IMR-90 (cell line): ENCODE measurements at regions of chr1 and their contacts with region 1.

Region 1: GRCh38 chr1:207787776-207788175 is 35.9 kb downstream of the CD46 start:
- DNase-seq: peak; percentile 46
- ATAC-seq: peak; percentile 62
- H3K4me3 ChIP-seq: no peak overlapping the region
- H3K27ac ChIP-seq: no peak overlapping the region
- H3K4me1 ChIP-seq: peaks cover 8% of the 10 kb centered on the region; the same call in 1 of the 2 replicates
- H3K27me3 ChIP-seq: no peaks in the 10 kb centered on the region
- CTCF ChIP-seq: no peak
- POLR2A ChIP-seq: no peak
- RAD21 ChIP-seq: no peak

Region 2: GRCh38 chr1:206834711-206835110 is 953.1 kb before region 1 on chr1:
- CTCF ChIA-PET with region 1: no interaction called
- POLR2A ChIA-PET with region 1: no interaction called
- dilution Hi-C with region 1: no loop called
- in situ Hi-C with region 1: no loop called
- intact Hi-C with region 1: no loop called
- DNase-seq: no peak
- ATAC-seq: no peak; the same call in 1 of the 2 replicates
- H3K4me3 ChIP-seq: no peak overlapping the region
- H3K27ac ChIP-seq: no peak overlapping the region
- H3K4me1 ChIP-seq: peaks cover 7% of the 10 kb centered on the region
- H3K27me3 ChIP-seq: peaks cover 7% of the 10 kb centered on the region
- CTCF ChIP-seq: no peak
- POLR2A ChIP-seq: no peak
- RAD21 ChIP-seq: no peak

Region 3: GRCh38 chr1:207763091-207763490 is 24.7 kb before region 1 on chr1:
- CTCF ChIA-PET with region 1: no interaction called
- POLR2A ChIA-PET with region 1: no interaction called
- dilution Hi-C with region 1: no loop called
- in situ Hi-C with region 1: no loop called
- intact Hi-C with region 1: loop called (anchors 2 kb)
- DNase-seq: no peak
- ATAC-seq: no peak
- H3K4me3 ChIP-seq: no peak overlapping the region
- H3K27ac ChIP-seq: no peak overlapping the region
- H3K4me1 ChIP-seq: no peaks in the 10 kb centered on the region
- H3K27me3 ChIP-seq: no peaks in the 10 kb centered on the region
- CTCF ChIP-seq: no peak
- POLR2A ChIP-seq: no peak
- RAD21 ChIP-seq: no peak

Region 4: GRCh38 chr1:207803678-207804077 is 15.9 kb after region 1 on chr1:
- CTCF ChIA-PET with region 1: no interaction called
- POLR2A ChIA-PET with region 1: no interaction called
- dilution Hi-C with region 1: no loop called
- in situ Hi-C with region 1: no loop called
- intact Hi-C with region 1: no loop called
- DNase-seq: no peak
- ATAC-seq: no peak
- H3K4me3 ChIP-seq: no peak overlapping the region
- H3K27ac ChIP-seq: no peak overlapping the region
- H3K4me1 ChIP-seq: peaks cover 9% of the 10 kb centered on the region
- H3K27me3 ChIP-seq: no peaks in the 10 kb centered on the region
- CTCF ChIP-seq: no peak
- POLR2A ChIP-seq: no peak
- RAD21 ChIP-seq: no peak

Region 5: GRCh38 chr1:207823880-207824566 is 36.2 kb after region 1 on chr1:
- CTCF ChIA-PET with region 1: no interaction called
- POLR2A ChIA-PET with region 1: no interaction called
- dilution Hi-C with region 1: no loop called
- in situ Hi-C with region 1: no loop called
- intact Hi-C with region 1: no loop called
- DNase-seq: peak; percentile 97
- ATAC-seq: peak; percentile 76
- H3K4me3 ChIP-seq: peak overlapping the region; percentile 17; the same call in 1 of the 2 replicates
- H3K27ac ChIP-seq: peak overlapping the region; percentile 80
- H3K4me1 ChIP-seq: peaks cover 30% of the 10 kb centered on the region
- H3K27me3 ChIP-seq: no peaks in the 10 kb centered on the region
- CTCF ChIP-seq: peak; percentile 83
- POLR2A ChIP-seq: no peak
- RAD21 ChIP-seq: peak; percentile 36

Region 6: GRCh38 chr1:207848234-207848633 is 60.5 kb after region 1 on chr1:
- CTCF ChIA-PET with region 1: no interaction called
- POLR2A ChIA-PET with region 1: no interaction called
- dilution Hi-C with region 1: no loop called
- in situ Hi-C with region 1: no loop called
- intact Hi-C with region 1: no loop called
- DNase-seq: peak; percentile 59
- ATAC-seq: peak; percentile 40; the same call in 1 of the 2 replicates
- H3K4me3 ChIP-seq: no peak overlapping the region
- H3K27ac ChIP-seq: no peak overlapping the region
- H3K4me1 ChIP-seq: no peaks in the 10 kb centered on the region
- H3K27me3 ChIP-seq: no peaks in the 10 kb centered on the region
- CTCF ChIP-seq: no peak
- POLR2A ChIP-seq: no peak
- RAD21 ChIP-seq: no peak